Gastrocnemius medialis (tissue), 4 donors: ENCODE measurements at regions of chr1 and their contacts with region 1.

Region 1: GRCh38 chr1:98059620-98060019 is 138.8 kb upstream of the DPYD start:
- DNase-seq: no peak
- ATAC-seq: no peak
- H3K4me3 ChIP-seq: no peak overlapping the region
- H3K27ac ChIP-seq: no peak overlapping the region
- H3K4me1 ChIP-seq: no peaks in the 10 kb centered on the region
- H3K27me3 ChIP-seq: peaks cover 0 to 14% (median 14%) of the 10 kb centered on the region in 3 donors
- CTCF ChIP-seq: no peak
- POLR2A ChIP-seq: no peak

Region 2: DNA sequence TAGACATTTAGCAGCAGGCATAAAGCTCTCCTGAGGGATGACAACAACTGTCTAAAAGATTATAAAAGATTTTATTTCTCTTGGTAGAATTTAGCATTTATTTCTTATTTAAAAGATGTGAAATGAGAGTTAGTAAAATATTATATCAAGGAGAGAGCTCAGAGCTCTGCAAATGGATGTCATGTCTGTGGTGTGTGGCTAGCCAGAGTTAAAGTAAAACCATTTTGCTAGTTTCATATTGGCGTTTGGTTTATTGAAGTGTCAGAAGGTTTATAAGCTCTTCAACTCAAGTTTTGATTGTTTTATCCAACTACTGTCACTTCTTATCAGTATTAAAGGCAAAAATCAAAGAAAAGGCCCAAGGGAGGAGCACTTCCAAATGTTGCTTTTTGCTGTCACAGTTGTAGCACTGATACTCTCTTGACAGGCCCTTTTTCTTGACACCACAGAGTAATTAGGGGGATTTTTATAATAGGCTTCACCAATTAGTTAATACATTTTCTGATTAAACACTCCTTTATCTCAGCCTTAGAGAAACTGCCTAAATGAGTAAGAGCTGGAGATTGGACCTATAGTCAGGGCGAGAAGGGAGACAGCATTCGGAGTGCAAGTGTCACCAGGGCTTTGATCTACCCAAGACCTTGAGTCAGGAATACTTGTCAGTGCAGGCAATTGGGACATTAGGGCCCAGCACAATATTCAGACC is 1104.2 kb before region 1 on chr1:
- in situ Hi-C with region 1: loop called in 2 of 4 experiments (anchors 5 to 10 kb)
- intact Hi-C with region 1: no loop called
- DNase-seq: no peak
- ATAC-seq: no peak
- H3K4me3 ChIP-seq: no peak overlapping the region
- H3K27ac ChIP-seq: no peak overlapping the region
- H3K4me1 ChIP-seq: no peaks in the 10 kb centered on the region
- H3K27me3 ChIP-seq: no peaks in the 10 kb centered on the region
- CTCF ChIP-seq: no peak
- POLR2A ChIP-seq: no peak

Region 3: DNA sequence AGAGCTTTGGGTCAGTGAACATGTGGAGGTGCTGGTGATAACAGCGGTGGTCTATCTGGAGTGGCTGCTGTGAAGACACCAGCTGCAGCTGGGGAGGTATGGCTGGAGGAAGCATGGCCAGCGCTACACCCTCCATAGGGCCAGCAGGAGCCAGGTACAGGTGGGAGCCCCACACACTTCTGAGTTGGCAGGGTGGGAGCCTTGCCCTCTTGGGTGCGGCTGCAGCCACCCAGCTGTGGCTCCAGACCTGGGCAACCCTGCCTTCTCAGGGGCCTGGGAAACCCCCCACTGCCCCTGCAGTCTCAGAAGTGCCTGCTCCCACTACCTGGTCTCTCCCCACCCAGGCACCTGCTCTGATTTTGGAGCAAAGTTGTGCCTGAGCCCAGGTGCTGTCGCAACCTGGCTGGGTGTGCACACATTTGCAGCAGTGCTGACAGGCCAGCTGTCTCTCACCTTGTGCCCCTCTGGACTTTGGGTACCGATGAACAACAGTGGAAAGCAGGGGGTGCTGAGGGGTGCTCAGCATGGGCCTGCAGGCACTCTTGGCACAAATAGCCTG is 215.0 kb before region 1 on chr1:
- in situ Hi-C with region 1: no loop called
- intact Hi-C with region 1: no loop called
- DNase-seq: no peak
- ATAC-seq: no peak
- H3K4me3 ChIP-seq: no peak overlapping the region
- H3K27ac ChIP-seq: no peak overlapping the region
- H3K4me1 ChIP-seq: peaks cover under 1 to 5% of the 10 kb centered on the region in 2 donors
- H3K27me3 ChIP-seq: no peaks in the 10 kb centered on the region
- CTCF ChIP-seq: no peak
- POLR2A ChIP-seq: no peak